HCT116 (cell line): ENCODE measurements at regions of chr5 and their contacts with region 1.

Region 1: GRCh38 chr5:155136216-155136850 is 122.8 kb downstream of the KIF4B start:
- DNase-seq: no peak
- ATAC-seq: no peak
- H3K4me3 ChIP-seq: no peak overlapping the region
- H3K27ac ChIP-seq: no peak overlapping the region
- H3K4me1 ChIP-seq: no peaks in the 10 kb centered on the region; a peak in 1 of 4 replicates
- H3K27me3 ChIP-seq: peaks cover 47% of the 10 kb centered on the region
- CTCF ChIP-seq: no peak
- POLR2A ChIP-seq: no peak
- RAD21 ChIP-seq: no peak

Region 2: DNA sequence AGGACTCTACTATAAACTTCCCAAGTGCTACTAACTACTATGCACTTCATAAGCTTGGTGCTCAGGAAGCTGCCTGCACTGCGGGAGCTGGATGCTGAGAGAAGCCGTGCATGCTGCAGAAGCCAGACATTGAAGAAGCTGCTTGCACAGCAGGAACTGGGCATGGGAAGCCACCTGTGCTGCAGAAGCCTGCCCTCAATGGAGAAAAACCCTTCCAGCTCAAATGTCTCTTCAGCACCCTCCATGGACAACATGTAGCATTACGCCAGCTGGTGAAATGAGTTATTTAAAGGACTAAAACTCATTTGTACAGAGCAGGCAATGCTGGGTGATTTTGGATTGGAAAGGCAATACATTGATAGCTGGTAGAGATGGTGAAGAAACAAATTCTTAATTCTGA is 124.5 kb after region 1 on chr5:
- CTCF ChIA-PET with region 1: interaction called, 10 read pairs
- POLR2A ChIA-PET with region 1: no interaction called
- RAD21 ChIA-PET with region 1: no interaction called
- intact Hi-C with region 1: loop called (anchors 2 kb)
- DNase-seq: peak; percentile 6
- ATAC-seq: peak; percentile 80
- H3K4me3 ChIP-seq: no peak overlapping the region
- H3K27ac ChIP-seq: no peak overlapping the region
- H3K4me1 ChIP-seq: no peaks in the 10 kb centered on the region
- H3K27me3 ChIP-seq: peaks cover 14% of the 10 kb centered on the region; the same call in 1 of the 2 replicates
- CTCF ChIP-seq: peak; percentile 24 to 47 (median 42); a peak in 5 of 6 replicates
- POLR2A ChIP-seq: no peak
- RAD21 ChIP-seq: peak; percentile 44; the same call in 1 of the 2 replicates

Region 3: GRCh38 chr5:156824800-156825199 is 1688.5 kb after region 1 on chr5:
- CTCF ChIA-PET with region 1: no interaction called
- POLR2A ChIA-PET with region 1: no interaction called
- RAD21 ChIA-PET with region 1: no interaction called
- intact Hi-C with region 1: loop called (anchors 1 kb)
- DNase-seq: peak; percentile 21
- ATAC-seq: no peak; the same call in 1 of the 2 replicates
- H3K4me3 ChIP-seq: no peak overlapping the region
- H3K27ac ChIP-seq: no peak overlapping the region
- H3K4me1 ChIP-seq: no peaks in the 10 kb centered on the region
- H3K27me3 ChIP-seq: 0 out of 2 replicates have a peak, but pooled peaks cover 4% of the 10 kb centered on the region
- CTCF ChIP-seq: peak in 2 of 3 experiments; percentile 6 to 45; a peak in 1 of 6 replicates
- POLR2A ChIP-seq: no peak
- RAD21 ChIP-seq: peak; percentile 51